ENCODE measurements at regions of chr4 and their contacts with region 1.

Region 1: GRCh38 chr4:101169044-101170014 is 178.0 kb downstream of the PPP3CA start:
- DNase-seq: peak; percentile 24 to 51
- ATAC-seq: peak; percentile 91 to 99 (median 96)
- H3K4me3 ChIP-seq: no peak overlapping the region
- H3K27ac ChIP-seq: no peak overlapping the region
- H3K4me1 ChIP-seq: peaks cover 6% of the 10 kb centered on the region
- H3K27me3 ChIP-seq: no peaks in the 10 kb centered on the region
- CTCF ChIP-seq: peak; percentile 76

Region 2: GRCh38 chr4:101730291-101731117 is 561.2 kb after region 1 on chr4:
- intact Hi-C with region 1: loop called (anchors 2 to 5 kb)
- DNase-seq: peak; percentile 47 to 71
- ATAC-seq: peak; percentile 82 to 97 (median 94)
- H3K4me3 ChIP-seq: no peak overlapping the region
- H3K27ac ChIP-seq: no peak overlapping the region
- H3K4me1 ChIP-seq: no peaks in the 10 kb centered on the region
- H3K27me3 ChIP-seq: no peaks in the 10 kb centered on the region
- CTCF ChIP-seq: peak; percentile 81